Naive thymus-derived CD8-positive, alpha-beta T cell (primary cell): ENCODE measurements at regions of chr14 and their contacts with region 1.

Region 1: GRCh38 chr14:89618811-89619551 is 201.9 kb upstream of the FOXN3 start:
- DNase-seq: peak; percentile 50 to 84 (median 70)
- ATAC-seq: peak; percentile 65 to 67
- H3K4me3 Mint-ChIP-seq: peak overlapping the region; percentile 82 to 98 (median 95)
- H3K27ac Mint-ChIP-seq: peak overlapping the region; percentile 86 to 99 (median 97)
- H3K4me1 Mint-ChIP-seq: peaks cover 25 to 74% (median 67%) of the 10 kb centered on the region in 4 donors
- H3K27me3 Mint-ChIP-seq: no peaks in the 10 kb centered on the region

Region 2: GRCh38 chr14:89416002-89416995 is 202.7 kb before region 1 on chr14:
- POLR2A ChIA-PET with region 1: interaction called, 11 read pairs
- DNase-seq: peak; percentile 97 to 100 (median 99)
- ATAC-seq: peak; percentile 73 to 79
- H3K4me3 Mint-ChIP-seq: peak overlapping the region; percentile 85 to 98 (median 94)
- H3K27ac Mint-ChIP-seq: peak overlapping the region; percentile 86 to 98 (median 93)
- H3K4me1 Mint-ChIP-seq: peaks cover 36 to 66% (median 63%) of the 10 kb centered on the region in 4 donors
- H3K27me3 Mint-ChIP-seq: no peaks in the 10 kb centered on the region

Region 3: GRCh38 chr14:89630101-89630829 is 11.3 kb after region 1 on chr14:
- POLR2A ChIA-PET with region 1: interaction called, 17 read pairs
- DNase-seq: no peak
- ATAC-seq: no peak
- H3K4me3 Mint-ChIP-seq: peak overlapping the region in 1 of 10 donors; percentile 10
- H3K27ac Mint-ChIP-seq: peak overlapping the region in 9 of 10 donors; percentile 65 to 92 (median 82)
- H3K4me1 Mint-ChIP-seq: peaks cover 25 to 68% (median 51%) of the 10 kb centered on the region in 4 donors
- H3K27me3 Mint-ChIP-seq: no peaks in the 10 kb centered on the region

Region 4: GRCh38 chr14:89641495-89642175 is 22.7 kb after region 1 on chr14:
- POLR2A ChIA-PET with region 1: interaction called, 15 read pairs
- DNase-seq: peak in 1 of 10 donors; percentile 28
- ATAC-seq: peak; percentile 77 to 80
- H3K4me3 Mint-ChIP-seq: peak overlapping the region; percentile 41 to 78 (median 64)
- H3K27ac Mint-ChIP-seq: peak overlapping the region; percentile 73 to 96 (median 88)
- H3K4me1 Mint-ChIP-seq: peaks cover 19 to 43% (median 37%) of the 10 kb centered on the region in 4 donors
- H3K27me3 Mint-ChIP-seq: no peaks in the 10 kb centered on the region

Region 5: DNA sequence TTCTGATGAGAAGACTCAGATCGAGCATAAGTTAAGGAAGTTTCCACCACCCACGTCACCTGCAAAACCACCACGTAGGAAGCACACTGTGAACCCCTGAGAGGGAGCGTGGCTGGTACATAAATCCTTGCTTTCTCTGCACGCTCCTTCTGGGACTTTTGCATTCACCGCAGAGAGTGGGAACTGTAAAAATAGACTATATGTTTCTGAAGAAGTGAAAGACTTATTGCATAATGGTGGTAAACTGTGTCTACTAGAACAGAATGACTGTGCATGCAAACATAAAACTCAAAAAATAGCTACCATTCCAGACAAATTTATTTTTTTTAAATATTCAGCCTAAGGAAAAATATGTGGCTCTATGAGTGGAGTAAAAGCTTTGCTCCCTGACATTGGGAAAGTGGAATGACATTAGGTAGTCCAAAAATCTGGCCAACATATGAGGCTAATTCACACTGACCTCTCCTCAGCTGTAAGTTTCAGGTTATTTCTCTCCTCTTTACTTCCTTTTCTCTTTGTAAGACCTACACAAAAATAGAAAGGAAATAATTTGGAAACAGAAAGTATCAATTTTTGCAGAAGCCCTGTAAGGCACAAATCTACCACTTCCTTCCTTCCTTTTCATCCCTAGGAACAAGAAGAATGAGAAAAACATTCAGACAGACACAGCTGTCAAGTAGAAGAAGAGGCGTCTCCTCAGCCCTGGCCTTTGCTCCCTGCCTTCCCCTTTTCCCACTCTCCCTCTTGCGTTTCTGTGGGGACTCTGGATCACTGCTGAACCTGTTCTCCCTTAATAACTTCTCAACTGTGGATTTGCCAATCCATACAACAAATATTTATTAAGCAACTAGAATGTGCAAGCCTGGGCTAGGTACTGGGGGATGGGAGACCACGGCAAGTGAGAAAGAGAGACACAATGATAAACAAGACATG is 62.4 kb after region 1 on chr14:
- POLR2A ChIA-PET with region 1: interaction called, 21 read pairs
- DNase-seq: peak in 7 of 10 donors; percentile 8 to 47 (median 24)
- ATAC-seq: peak; percentile 78 to 85
- H3K4me3 Mint-ChIP-seq: peak overlapping the region; percentile 58 to 90 (median 83)
- H3K27ac Mint-ChIP-seq: peak overlapping the region; percentile 78 to 99 (median 95)
- H3K4me1 Mint-ChIP-seq: peaks cover 21 to 49% (median 44%) of the 10 kb centered on the region in 4 donors
- H3K27me3 Mint-ChIP-seq: no peaks in the 10 kb centered on the region

Region 6: GRCh38 chr14:89720741-89721315 is 101.8 kb after region 1 on chr14:
- POLR2A ChIA-PET with region 1: interaction called, 81 read pairs
- DNase-seq: peak; percentile 51 to 93 (median 83)
- ATAC-seq: peak; percentile 86 to 94
- H3K4me3 Mint-ChIP-seq: peak overlapping the region; percentile 62 to 83 (median 68)
- H3K27ac Mint-ChIP-seq: peak overlapping the region; percentile 97 to 99 (median 98)
- H3K4me1 Mint-ChIP-seq: peaks cover 49 to 95% (median 88%) of the 10 kb centered on the region in 4 donors
- H3K27me3 Mint-ChIP-seq: no peaks in the 10 kb centered on the region

Region 7: DNA sequence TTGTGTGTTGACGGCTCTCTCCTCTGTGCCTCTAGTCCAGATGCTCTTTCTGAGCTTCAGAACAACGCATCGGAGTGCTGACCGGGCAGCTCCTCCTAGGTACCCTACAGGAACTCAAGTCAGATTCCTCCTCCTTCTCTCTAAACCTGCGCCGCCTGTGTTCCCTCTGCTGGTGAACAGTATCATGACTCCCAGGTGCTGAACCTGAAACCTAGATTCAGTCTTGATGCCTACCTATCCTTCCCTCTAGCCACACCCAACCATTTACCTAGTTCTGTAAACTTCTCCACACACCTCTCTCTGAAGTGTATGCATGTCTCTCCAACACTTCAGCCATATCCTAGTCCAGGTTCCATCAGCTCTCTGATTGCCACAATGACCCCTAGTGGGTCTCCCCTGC is 222.9 kb after region 1 on chr14:
- POLR2A ChIA-PET with region 1: no interaction called
- DNase-seq: no peak
- ATAC-seq: no peak
- H3K4me3 Mint-ChIP-seq: no peak overlapping the region
- H3K27ac Mint-ChIP-seq: peak overlapping the region in 1 of 10 donors; percentile 56
- H3K4me1 Mint-ChIP-seq: peaks cover 0 to 1% (median 0%) of the 10 kb centered on the region in 4 donors
- H3K27me3 Mint-ChIP-seq: peaks cover 0 to 4% (median 0%) of the 10 kb centered on the region in 5 donors